H1 (cell line): ENCODE measurements at regions of chr20 and their contacts with region 1.

Region 1: GRCh38 chr20:62302341-62303058 is at the start of gene ADRM1:
- DNase-seq: peak; percentile 89 to 98
- H3K4me3 ChIP-seq: peak within 1 kb of the TSS; percentile 62 to 96 (median 90)
- H3K27ac ChIP-seq: peak within 1 kb of the TSS; percentile 73; the same call in 1 of the 2 replicates
- H3K4me1 ChIP-seq: peaks cover 0 to 9% (median 4%) of the 10 kb centered on the region in 4 experiments; a peak in 5 of 7 replicates
- H3K27me3 ChIP-seq: no peaks in the 10 kb centered on the region
- CTCF ChIP-seq: peak; percentile 64 to 98 (median 75)
- EP300 ChIP-seq: peak; percentile 44 to 90; a peak in 2 of 3 replicates
- POLR2A ChIP-seq: peak in 1 of 2 experiments; percentile 76; a peak in 2 of 3 replicates
- RAD21 ChIP-seq: peak; percentile 47 to 56
- total RNA-seq, gene ADRM1: 126 and 138 TPM in 2 replicates

Region 2: DNA sequence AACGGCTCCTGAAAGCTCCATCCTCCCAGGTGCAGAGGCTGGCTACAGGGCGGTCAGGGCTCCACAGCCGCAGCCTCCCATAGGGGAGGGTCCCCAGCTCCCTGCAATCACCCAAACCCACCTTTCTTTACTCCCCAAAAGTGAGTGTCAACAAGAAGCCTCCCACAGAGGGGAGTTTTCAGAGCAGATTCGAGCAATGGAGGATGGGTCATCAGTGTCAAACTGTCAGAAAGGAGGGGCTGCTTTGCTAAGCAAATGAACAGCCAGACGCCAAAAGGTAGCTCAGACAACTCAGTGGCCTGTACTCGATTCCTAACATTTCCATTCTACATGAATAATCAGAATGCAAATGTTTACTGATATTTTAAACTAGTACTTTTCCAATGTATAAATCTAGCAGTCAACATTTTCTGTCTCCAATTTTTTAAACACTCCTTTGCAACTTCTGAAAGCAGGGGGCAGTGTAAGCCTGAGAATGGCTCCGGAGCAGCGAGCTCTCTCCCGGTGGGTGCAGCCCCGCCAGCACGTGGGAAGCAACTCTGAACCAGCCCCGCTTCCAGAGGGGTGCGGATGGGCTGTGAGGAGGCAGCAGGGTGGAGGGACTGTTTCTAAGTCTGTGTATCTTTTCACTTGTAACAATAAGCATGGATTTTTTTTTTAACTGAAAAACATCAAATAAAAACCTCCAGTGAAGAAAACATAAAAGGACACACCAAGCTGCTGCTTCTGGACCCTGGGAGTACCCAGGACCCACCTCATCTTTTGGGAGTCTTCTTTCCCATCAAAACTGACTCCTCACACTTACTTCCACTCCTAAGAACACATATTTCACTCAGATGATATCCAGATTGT is 291.7 kb before region 1 on chr20:
- CTCF ChIA-PET with region 1: no interaction called
- POLR2A ChIA-PET with region 1: no interaction called
- DNase-seq: peak; percentile 23 to 70
- H3K4me3 ChIP-seq: no peak overlapping the region
- H3K27ac ChIP-seq: no peak overlapping the region
- H3K4me1 ChIP-seq: peaks cover 0 to 2% (median 0%) of the 10 kb centered on the region in 4 experiments; a peak in 3 of 7 replicates
- H3K27me3 ChIP-seq: no peaks in the 10 kb centered on the region
- CTCF ChIP-seq: peak; percentile 43 to 77 (median 62)
- EP300 ChIP-seq: no peak
- POLR2A ChIP-seq: no peak
- RAD21 ChIP-seq: peak; percentile 92 to 93

Region 3: GRCh38 chr20:62320581-62321354 is 18.3 kb after region 1 on chr20:
- CTCF ChIA-PET with region 1: interaction called, 8 read pairs
- POLR2A ChIA-PET with region 1: interaction called, 151 read pairs
- DNase-seq: no peak
- H3K4me3 ChIP-seq: no peak overlapping the region
- H3K27ac ChIP-seq: no peak overlapping the region
- H3K4me1 ChIP-seq: no peaks in the 10 kb centered on the region
- H3K27me3 ChIP-seq: no peaks in the 10 kb centered on the region
- CTCF ChIP-seq: no peak
- EP300 ChIP-seq: no peak
- POLR2A ChIP-seq: no peak
- RAD21 ChIP-seq: no peak

Region 4: DNA sequence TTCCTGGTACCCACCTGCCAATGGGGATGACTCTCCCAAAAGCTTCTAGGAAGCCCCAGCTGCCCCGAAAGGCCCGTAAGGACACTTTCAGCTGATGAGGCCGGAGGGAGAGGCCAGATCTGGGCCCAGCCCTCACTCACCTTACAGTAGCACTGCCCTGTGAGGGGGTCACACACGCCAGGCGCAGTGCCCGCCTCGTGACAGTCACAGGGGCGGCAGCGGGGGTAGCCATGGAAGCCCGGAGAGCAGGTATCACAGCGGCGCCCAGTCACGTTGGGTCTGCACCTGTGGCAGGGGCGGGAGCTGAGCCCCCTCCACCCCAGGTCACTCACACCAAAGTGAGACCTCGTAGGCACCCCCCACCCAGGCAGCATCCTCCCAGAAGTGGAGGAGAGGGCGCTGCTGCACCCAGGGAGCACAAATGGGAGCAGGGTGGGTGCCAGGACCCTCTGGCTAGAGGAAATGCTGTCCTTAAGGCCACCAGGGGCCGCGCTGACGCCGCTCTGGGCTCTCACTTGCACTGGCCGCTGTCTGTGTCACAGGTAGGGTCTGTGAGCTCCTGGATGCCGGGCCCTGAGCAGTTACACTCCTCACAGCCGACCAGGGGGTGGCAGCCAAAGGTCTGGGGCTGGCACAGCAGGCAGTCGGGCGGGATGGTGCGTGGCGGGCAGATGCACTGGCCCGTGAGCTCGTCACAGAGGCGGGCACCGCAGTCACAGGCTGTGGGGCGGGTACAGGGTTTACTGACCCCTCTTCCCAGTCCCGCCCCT is 25.4 kb after region 1 on chr20:
- CTCF ChIA-PET with region 1: interaction called, 8 read pairs
- POLR2A ChIA-PET with region 1: interaction called, 151 read pairs
- DNase-seq: no peak
- H3K4me3 ChIP-seq: no peak overlapping the region
- H3K27ac ChIP-seq: no peak overlapping the region
- H3K4me1 ChIP-seq: no peaks in the 10 kb centered on the region
- H3K27me3 ChIP-seq: no peaks in the 10 kb centered on the region
- CTCF ChIP-seq: peak in 1 of 3 experiments; percentile 13; a peak in 1 of 4 replicates
- EP300 ChIP-seq: no peak
- POLR2A ChIP-seq: no peak
- RAD21 ChIP-seq: peak in 1 of 2 experiments; percentile 20; a peak in 1 of 4 replicates

Region 5: DNA sequence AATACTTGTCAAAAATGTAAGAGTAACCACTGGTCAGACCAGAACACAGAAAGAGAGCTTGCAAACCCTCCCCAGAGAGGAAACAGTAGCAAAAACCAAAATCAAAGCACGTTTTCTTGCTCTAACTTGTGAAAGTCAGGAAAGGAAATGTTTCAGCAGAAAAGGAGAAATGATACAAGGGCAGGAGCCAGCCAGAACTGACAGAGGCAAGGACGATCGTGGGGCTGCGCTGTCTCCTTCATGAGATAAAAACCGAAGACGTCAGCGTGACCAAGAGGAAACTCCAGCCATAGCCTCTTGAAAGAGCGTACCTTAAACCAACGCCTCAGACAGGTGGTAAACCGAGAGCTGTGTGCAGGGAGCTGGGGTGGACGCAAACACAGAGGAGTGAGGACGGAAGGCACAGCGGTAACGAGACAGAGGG is 37.2 kb after region 1 on chr20:
- CTCF ChIA-PET with region 1: interaction called, 4 read pairs
- POLR2A ChIA-PET with region 1: interaction called, 151 read pairs
- DNase-seq: no peak
- H3K4me3 ChIP-seq: no peak overlapping the region
- H3K27ac ChIP-seq: no peak overlapping the region
- H3K4me1 ChIP-seq: no peaks in the 10 kb centered on the region
- H3K27me3 ChIP-seq: no peaks in the 10 kb centered on the region
- CTCF ChIP-seq: no peak
- EP300 ChIP-seq: no peak
- POLR2A ChIP-seq: no peak
- RAD21 ChIP-seq: no peak

Region 6: GRCh38 chr20:62357187-62357667 is 54.7 kb after region 1 on chr20:
- CTCF ChIA-PET with region 1: interaction called, 5 read pairs
- POLR2A ChIA-PET with region 1: interaction called, 170 read pairs
- DNase-seq: no peak
- H3K4me3 ChIP-seq: no peak overlapping the region
- H3K27ac ChIP-seq: no peak overlapping the region
- H3K4me1 ChIP-seq: peaks cover 3 to 59% (median 46%) of the 10 kb centered on the region in 4 experiments
- H3K27me3 ChIP-seq: no peaks in the 10 kb centered on the region
- CTCF ChIP-seq: no peak
- EP300 ChIP-seq: no peak
- POLR2A ChIP-seq: no peak
- RAD21 ChIP-seq: no peak